GM12878 (cell line): ENCODE measurements at regions of chr5 and their contacts with region 1.

Region 1: GRCh38 chr5:34957857-34958690 is 28.7 kb downstream of the DNAJC21 start:
- DNase-seq: no peak
- ATAC-seq: peak; percentile 90
- H3K4me3 ChIP-seq: no peak overlapping the region
- H3K27ac ChIP-seq: no peak overlapping the region
- H3K4me1 ChIP-seq: peaks cover 11% of the 10 kb centered on the region; the same call in 1 of the 2 replicates
- H3K27me3 ChIP-seq: no peaks in the 10 kb centered on the region
- CTCF ChIP-seq: peak; percentile 59 to 72 (median 70)
- EP300 ChIP-seq: no peak
- POLR2A ChIP-seq: no peak
- RAD21 ChIP-seq: peak; percentile 49

Region 2: DNA sequence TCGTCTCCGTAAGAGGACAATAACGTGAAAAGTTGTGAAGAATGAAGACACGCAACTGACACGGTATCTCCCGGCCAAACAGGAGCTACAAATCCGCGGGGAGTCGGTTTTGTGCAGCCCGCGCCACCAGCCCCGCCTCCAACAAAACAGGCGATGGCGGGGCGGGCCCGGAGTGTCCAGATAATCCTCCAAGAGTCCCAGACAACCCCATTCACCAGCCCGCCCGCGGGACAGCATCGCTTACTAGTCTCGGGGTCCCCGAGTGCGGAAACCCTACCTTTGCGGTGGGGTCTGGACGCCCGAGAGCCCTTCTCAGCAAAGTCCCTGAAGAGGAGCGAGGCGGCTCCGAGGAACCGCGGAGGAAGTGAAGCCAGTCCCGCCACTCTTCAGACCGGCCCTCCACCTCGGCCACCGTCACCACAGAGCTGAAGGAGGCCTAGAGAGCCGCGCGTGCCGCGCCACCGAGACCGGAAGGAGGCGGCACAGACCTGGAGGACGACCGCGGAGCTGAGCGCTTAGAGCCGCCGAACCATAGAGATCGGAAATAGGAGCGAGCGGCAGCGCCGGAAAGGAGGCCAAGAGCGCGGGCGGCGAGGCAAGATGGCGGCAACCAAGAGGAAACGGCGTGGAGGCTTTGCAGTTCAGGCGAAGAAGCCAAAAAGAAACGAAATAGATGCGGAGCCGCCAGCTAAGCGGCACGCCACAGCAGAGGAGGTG is 42.8 kb before region 1 on chr5 and contains the starts of genes BRIX1 and RAD1:
- CTCF ChIA-PET with region 1: interaction called, 12 read pairs
- POLR2A ChIA-PET with region 1: interaction called, 3 read pairs
- RAD21 ChIA-PET with region 1: interaction called, 3 read pairs
- SMC1A ChIA-PET with region 1: no interaction called
- in situ Hi-C with region 1: no loop called
- intact Hi-C with region 1: no loop called
- DNase-seq: peak; percentile 86
- ATAC-seq: peak; percentile 96
- H3K4me3 ChIP-seq: peak within 1 kb of the TSS; percentile 100
- H3K27ac ChIP-seq: peak within 1 kb of the TSS; percentile 90
- H3K4me1 ChIP-seq: peaks cover 6% of the 10 kb centered on the region; the same call in 1 of the 2 replicates
- H3K27me3 ChIP-seq: no peaks in the 10 kb centered on the region
- CTCF ChIP-seq: peak in 2 of 3 experiments; percentile 12 to 43; a peak in 3 of 6 replicates
- EP300 ChIP-seq: 0 out of 4 replicates have a peak, but pooled peaks of 1 of the 2 experiments have one; percentile 35
- POLR2A ChIP-seq: peak; percentile 90
- RAD21 ChIP-seq: no peak
- polyA plus RNA-seq, gene BRIX1: 58.2 to 77.4 TPM
- polyA plus RNA-seq, gene RAD1: 43.4 to 58.4 TPM

Region 3: DNA sequence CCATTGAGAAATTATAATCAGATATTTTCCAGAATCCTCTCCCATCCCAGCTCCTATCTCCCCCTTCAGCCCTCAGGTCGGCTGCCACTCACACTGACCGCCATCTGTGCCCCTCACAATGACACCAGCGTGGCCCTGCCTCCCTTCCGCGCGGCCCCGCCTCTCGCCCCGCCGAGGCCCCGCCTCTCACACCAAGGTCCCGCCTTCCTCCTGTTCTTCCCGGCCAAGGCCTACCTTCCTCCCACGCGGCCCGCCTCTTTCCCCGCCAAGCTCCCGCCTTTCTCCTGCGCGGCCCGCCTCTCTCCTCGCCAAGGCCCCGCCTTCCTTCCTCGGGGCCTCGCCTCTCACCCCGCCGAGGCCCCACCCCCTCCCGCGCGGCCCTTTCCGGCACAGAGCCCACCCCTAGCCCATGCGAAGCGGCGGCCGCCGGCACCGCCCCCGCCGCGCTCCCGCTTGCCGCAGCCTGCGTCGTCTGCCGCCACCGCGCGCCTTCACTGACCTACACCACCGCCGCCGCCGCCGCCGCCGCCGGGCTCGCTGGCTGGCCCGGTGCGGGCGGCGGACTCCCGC is 28.8 kb before region 1 on chr5 and contains the start of gene DNAJC21:
- CTCF ChIA-PET with region 1: interaction called, 19 read pairs
- POLR2A ChIA-PET with region 1: no interaction called
- RAD21 ChIA-PET with region 1: no interaction called
- SMC1A ChIA-PET with region 1: interaction called, 5 read pairs
- in situ Hi-C with region 1: no loop called
- intact Hi-C with region 1: no loop called
- DNase-seq: peak; percentile 88
- ATAC-seq: peak; percentile 92
- H3K4me3 ChIP-seq: peak within 1 kb of the TSS; percentile 83
- H3K27ac ChIP-seq: peak within 1 kb of the TSS; percentile 86
- H3K4me1 ChIP-seq: no peaks in the 10 kb centered on the region
- H3K27me3 ChIP-seq: no peaks in the 10 kb centered on the region
- CTCF ChIP-seq: no peak
- EP300 ChIP-seq: no peak
- POLR2A ChIP-seq: peak; percentile 78
- RAD21 ChIP-seq: no peak
- polyA plus RNA-seq, gene DNAJC21: 14.6 to 22.0 TPM

Region 4: DNA sequence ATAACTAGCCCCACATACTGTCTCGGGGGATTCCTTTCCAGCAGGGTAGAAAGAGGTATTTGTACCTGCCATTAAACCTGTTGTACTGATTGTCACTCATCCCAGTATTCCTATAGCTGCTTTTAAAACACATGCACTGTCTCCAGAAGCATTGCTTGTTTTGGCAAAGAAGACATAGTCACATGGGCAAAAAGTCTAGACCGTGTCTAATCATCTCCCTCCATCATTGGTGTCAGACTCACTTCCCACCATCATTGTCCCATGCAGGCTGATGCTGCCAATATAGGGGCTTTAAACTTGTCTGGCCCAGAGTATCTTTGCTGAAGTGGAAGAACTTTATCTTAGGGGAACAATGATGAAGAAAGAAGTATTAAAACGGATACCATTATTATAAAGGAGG is 16.1 kb before region 1 on chr5:
- CTCF ChIA-PET with region 1: interaction called, 19 read pairs
- POLR2A ChIA-PET with region 1: no interaction called
- RAD21 ChIA-PET with region 1: no interaction called
- SMC1A ChIA-PET with region 1: no interaction called
- in situ Hi-C with region 1: no loop called
- intact Hi-C with region 1: no loop called
- DNase-seq: no peak
- ATAC-seq: no peak
- H3K4me3 ChIP-seq: no peak overlapping the region
- H3K27ac ChIP-seq: no peak overlapping the region
- H3K4me1 ChIP-seq: no peaks in the 10 kb centered on the region
- H3K27me3 ChIP-seq: no peaks in the 10 kb centered on the region
- CTCF ChIP-seq: no peak
- EP300 ChIP-seq: no peak
- POLR2A ChIP-seq: no peak
- RAD21 ChIP-seq: no peak

Region 5: DNA sequence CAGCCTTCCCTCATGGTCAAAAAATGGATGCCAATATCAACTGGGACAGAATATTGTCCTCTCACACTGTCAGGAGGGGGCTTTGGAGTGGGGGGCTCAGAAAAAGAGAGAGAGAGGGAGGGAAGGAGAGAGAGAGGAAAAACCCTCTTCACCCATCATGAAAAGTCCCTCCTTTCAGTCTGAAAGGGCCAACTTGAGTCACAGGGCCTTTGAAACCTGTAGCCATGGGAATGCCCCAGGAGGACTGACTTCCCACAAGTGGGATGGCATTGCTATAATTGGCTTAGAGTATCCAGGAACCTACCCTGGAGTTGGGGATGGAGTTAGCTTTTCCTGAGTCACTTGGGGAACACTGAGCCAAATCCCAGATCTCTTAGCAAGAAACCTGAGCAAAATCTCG is 12.5 kb after region 1 on chr5:
- CTCF ChIA-PET with region 1: interaction called, 20 read pairs
- POLR2A ChIA-PET with region 1: no interaction called
- RAD21 ChIA-PET with region 1: interaction called, 3 read pairs
- SMC1A ChIA-PET with region 1: interaction called, 12 read pairs
- in situ Hi-C with region 1: no loop called
- intact Hi-C with region 1: no loop called
- DNase-seq: no peak
- ATAC-seq: peak; percentile 74
- H3K4me3 ChIP-seq: no peak overlapping the region
- H3K27ac ChIP-seq: no peak overlapping the region
- H3K4me1 ChIP-seq: no peaks in the 10 kb centered on the region
- H3K27me3 ChIP-seq: no peaks in the 10 kb centered on the region
- CTCF ChIP-seq: no peak
- EP300 ChIP-seq: no peak
- POLR2A ChIP-seq: no peak
- RAD21 ChIP-seq: no peak

Region 6: GRCh38 chr5:34977934-34978613 is 20.0 kb after region 1 on chr5:
- CTCF ChIA-PET with region 1: interaction called, 22 read pairs
- POLR2A ChIA-PET with region 1: no interaction called
- RAD21 ChIA-PET with region 1: interaction called, 5 read pairs
- SMC1A ChIA-PET with region 1: interaction called, 12 read pairs
- in situ Hi-C with region 1: no loop called
- intact Hi-C with region 1: no loop called
- DNase-seq: peak; percentile 35
- ATAC-seq: peak; percentile 96
- H3K4me3 ChIP-seq: no peak overlapping the region
- H3K27ac ChIP-seq: no peak overlapping the region
- H3K4me1 ChIP-seq: no peaks in the 10 kb centered on the region
- H3K27me3 ChIP-seq: no peaks in the 10 kb centered on the region
- CTCF ChIP-seq: no peak
- EP300 ChIP-seq: peak; percentile 22 to 25; a peak in 1 of 4 replicates
- POLR2A ChIP-seq: no peak
- RAD21 ChIP-seq: no peak